Caco-2 (cell line): ENCODE measurements at regions of chr22 and their contacts with region 1.

Region 1: DNA sequence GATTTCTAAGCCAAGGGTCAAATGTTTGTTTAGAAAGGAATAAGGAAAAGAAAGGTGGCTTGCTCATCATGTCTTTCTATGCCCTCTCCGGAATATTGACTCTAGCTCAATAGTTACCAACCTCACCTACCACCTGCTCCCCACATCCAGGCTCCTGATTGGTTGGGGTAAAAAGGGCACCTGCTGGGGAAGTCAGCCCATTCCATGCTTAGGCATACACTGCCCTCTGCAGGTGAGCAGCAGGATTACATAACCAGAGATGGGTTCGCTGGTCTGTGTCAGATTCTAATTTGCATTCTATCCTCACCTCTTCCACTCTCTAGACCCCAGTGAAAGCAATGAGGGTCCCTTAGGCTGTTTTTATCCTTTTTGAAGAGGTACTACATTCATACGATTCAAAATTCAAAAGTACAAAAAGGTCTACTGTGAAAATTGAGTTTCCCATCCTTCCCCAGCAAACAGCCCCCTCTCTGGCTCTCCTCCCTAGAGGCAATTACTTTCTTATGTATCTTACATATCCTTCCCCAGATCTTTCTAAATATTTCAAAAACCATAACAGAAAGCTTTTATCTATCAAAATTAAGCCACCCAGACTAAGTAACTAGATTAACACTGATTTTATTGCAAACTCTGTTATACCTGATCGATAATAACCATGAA is 98.0 kb upstream of the ASPHD2 start:
- DNase-seq: peak; percentile 63 to 76
- H3K4me3 ChIP-seq: no peak overlapping the region
- H3K4me3 Mint-ChIP-seq: no peak overlapping the region
- H3K27ac Mint-ChIP-seq: no peak overlapping the region
- H3K4me1 ChIP-seq: no peaks in the 10 kb centered on the region
- H3K4me1 Mint-ChIP-seq: no peaks in the 10 kb centered on the region
- H3K27me3 ChIP-seq: no peaks in the 10 kb centered on the region; the same call in 1 of the 2 replicates
- H3K27me3 Mint-ChIP-seq: peaks cover 3% of the 10 kb centered on the region
- CTCF ChIP-seq: peak; percentile 83 to 85

Region 2: DNA sequence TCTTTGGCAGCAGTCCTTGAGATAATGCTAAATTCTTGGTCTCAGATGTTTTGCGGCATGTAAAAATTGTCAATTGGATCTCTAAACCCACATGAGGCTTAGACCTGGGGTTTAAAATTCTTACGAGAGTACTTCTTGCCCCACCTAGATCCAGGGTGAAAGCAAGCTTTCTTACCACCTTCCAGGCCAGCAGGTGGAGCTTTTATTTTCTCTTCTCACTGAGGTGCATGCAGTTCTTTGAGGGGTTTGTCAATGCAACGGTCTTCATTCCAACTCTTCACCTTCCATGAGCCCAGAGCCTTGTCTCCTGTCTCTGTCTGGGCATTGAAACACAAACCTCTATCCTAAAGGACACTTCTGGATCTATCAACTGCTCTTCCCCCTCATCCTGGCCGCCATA is 435.0 kb before region 1 on chr22:
- CTCF ChIA-PET with region 1: interaction called, 13 read pairs
- POLR2A ChIA-PET with region 1: no interaction called
- intact Hi-C with region 1: no loop called
- DNase-seq: no peak
- H3K4me3 ChIP-seq: no peak overlapping the region
- H3K4me3 Mint-ChIP-seq: no peak overlapping the region
- H3K27ac Mint-ChIP-seq: no peak overlapping the region
- H3K4me1 ChIP-seq: no peaks in the 10 kb centered on the region
- H3K4me1 Mint-ChIP-seq: no peaks in the 10 kb centered on the region
- H3K27me3 ChIP-seq: 0 out of 2 replicates have a peak, but pooled peaks cover under 1% of the 10 kb centered on the region
- H3K27me3 Mint-ChIP-seq: peaks cover 12% of the 10 kb centered on the region
- CTCF ChIP-seq: no peak

Region 3: DNA sequence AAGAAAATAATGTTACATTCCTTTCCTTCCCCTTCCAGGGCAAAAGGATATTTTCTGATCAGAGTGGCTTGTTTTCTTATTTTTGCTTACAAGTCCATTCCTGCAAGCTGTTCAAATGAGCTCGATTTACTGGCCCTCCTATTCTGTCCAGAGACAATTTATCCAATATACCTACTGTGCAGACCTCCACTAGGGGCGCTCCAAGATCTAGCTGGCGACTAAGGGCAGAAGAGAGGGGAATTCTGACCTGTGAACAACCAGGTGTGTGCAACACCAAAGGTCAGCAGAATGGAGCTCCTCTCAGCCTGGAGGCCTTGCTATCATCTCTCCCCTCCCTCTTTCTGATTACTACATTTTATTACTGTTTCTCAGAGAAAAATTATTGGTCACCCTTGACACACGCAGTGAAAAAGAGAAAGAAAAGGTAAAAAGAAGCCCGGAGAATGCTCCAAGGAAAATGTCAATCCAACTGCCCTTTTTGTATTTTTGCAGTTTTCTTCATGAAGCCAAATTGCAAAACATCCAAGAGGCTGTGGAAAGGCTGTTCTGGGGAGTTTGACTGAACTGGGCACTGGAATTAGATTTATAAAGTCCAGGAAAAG is 158.6 kb before region 1 on chr22:
- CTCF ChIA-PET with region 1: interaction called, 13 read pairs
- POLR2A ChIA-PET with region 1: no interaction called
- intact Hi-C with region 1: loop called (anchors 5 kb)
- DNase-seq: peak; percentile 67 to 68
- H3K4me3 ChIP-seq: no peak overlapping the region
- H3K4me3 Mint-ChIP-seq: no peak overlapping the region
- H3K27ac Mint-ChIP-seq: no peak overlapping the region
- H3K4me1 ChIP-seq: no peaks in the 10 kb centered on the region
- H3K4me1 Mint-ChIP-seq: no peaks in the 10 kb centered on the region
- H3K27me3 ChIP-seq: no peaks in the 10 kb centered on the region; the same call in 1 of the 2 replicates
- H3K27me3 Mint-ChIP-seq: peaks cover 9% of the 10 kb centered on the region
- CTCF ChIP-seq: peak; percentile 67 to 84